ENCODE measurements at regions of chr11 and their contacts with region 1.

Region 1: DNA sequence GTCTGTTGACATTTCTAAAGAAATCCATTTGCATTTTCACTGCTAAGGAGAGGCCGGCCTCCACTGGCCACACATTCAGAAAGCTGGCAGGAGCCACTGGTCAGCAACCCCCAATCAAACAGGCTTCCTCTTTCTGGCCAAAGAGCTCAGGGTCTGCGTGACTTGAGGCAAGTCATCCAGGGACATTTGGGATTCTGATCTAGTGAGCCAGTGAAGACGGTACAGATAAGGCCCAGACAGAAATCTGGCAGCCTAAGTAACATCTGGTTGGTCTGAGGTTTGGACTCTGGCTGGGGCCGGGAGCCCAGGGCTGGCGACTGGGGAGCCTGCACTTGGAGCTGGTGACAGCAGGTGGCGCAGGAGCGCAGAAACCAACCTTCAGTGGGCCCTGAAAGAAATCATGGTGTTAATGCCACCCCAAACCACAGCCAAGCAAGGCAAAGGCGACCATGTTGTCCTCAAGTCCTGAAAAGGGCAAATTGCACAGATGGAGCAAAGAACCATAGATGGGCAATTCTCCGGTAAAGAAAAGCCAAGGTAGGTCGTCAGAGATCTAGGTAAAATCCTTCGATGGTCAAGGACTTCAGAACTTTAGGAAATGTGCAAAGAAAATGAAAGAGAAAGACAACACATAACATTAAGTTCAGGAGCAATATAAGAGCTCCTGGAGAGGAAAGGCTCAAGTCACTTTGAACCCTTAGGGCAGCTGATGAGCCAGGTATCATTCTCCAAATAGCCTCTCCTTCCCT is 99.4 kb upstream of the BLID start:
- DNase-seq: peak; percentile 39 to 50 (median 45)
- H3K4me3 ChIP-seq: no peak overlapping the region
- H3K4me3 Mint-ChIP-seq: no peak overlapping the region
- H3K27ac ChIP-seq: no peak overlapping the region
- H3K27ac Mint-ChIP-seq: peak overlapping the region in 1 of 7 donors; percentile 66
- H3K4me1 ChIP-seq: peaks cover under 1 to 2% of the 10 kb centered on the region in 2 donors
- H3K4me1 Mint-ChIP-seq: peaks cover 4% of the 10 kb centered on the region
- H3K27me3 ChIP-seq: no peaks in the 10 kb centered on the region
- H3K27me3 Mint-ChIP-seq: peaks cover 0 to 2% (median 0%) of the 10 kb centered on the region in 3 donors
- CTCF ChIP-seq: peak; percentile 91

Region 2: GRCh38 chr11:122505304-122506006 is 290.0 kb after region 1 on chr11:
- intact Hi-C with region 1: loop called (anchors 2 kb)
- DNase-seq: peak; percentile 45 to 69 (median 50)
- H3K4me3 ChIP-seq: no peak overlapping the region
- H3K4me3 Mint-ChIP-seq: no peak overlapping the region
- H3K27ac ChIP-seq: no peak overlapping the region
- H3K27ac Mint-ChIP-seq: no peak overlapping the region
- H3K4me1 ChIP-seq: no peaks in the 10 kb centered on the region
- H3K4me1 Mint-ChIP-seq: peaks cover 6% of the 10 kb centered on the region
- H3K27me3 ChIP-seq: no peaks in the 10 kb centered on the region
- H3K27me3 Mint-ChIP-seq: peaks cover 0 to 3% (median 2%) of the 10 kb centered on the region in 3 donors
- CTCF ChIP-seq: peak; percentile 84

Measured in CD14-positive monocyte (primary cell).